ENCODE measurements at regions of chr6 and their contacts with region 1.

Region 1: DNA sequence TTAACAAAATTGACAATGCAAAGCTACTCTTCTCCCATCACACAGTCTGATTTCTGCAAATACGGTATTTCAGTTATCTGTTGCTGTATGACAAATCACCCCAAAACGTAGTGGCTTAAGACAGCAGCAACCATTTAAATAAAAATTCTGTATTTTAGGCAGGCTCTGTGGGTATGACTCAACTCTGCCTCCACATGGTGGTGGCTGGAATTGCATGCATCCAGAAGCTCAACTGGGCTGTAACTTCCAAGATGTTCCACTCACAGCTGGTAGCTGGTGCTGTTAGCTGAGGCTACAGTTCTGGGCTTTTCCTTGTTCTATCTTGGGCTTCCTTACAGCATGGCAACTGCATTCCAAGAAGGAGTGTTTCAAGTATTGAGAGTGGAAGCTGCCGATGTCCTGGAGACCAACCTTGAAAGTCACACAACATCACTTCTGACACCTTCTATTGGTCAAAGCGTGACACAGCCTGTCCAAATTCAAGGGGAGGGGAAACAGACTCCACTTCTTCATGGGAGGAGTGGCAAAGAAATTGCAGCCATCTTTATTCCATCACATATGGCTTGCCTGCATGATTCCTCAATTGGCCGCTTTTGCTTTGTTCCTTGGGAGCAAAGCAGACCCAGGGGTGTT is 39.7 kb upstream of the TULP1 start:
- DNase-seq: peak; percentile 36 to 84
- H3K4me3 ChIP-seq: no peak overlapping the region
- H3K27ac ChIP-seq: no peak overlapping the region
- H3K4me1 ChIP-seq: no peaks in the 10 kb centered on the region
- H3K27me3 ChIP-seq: no peaks in the 10 kb centered on the region
- CTCF ChIP-seq: peak; percentile 76 to 94 (median 83)
- EP300 ChIP-seq: no peak
- POLR2A ChIP-seq: no peak
- RAD21 ChIP-seq: peak; percentile 80 to 85

Region 2: DNA sequence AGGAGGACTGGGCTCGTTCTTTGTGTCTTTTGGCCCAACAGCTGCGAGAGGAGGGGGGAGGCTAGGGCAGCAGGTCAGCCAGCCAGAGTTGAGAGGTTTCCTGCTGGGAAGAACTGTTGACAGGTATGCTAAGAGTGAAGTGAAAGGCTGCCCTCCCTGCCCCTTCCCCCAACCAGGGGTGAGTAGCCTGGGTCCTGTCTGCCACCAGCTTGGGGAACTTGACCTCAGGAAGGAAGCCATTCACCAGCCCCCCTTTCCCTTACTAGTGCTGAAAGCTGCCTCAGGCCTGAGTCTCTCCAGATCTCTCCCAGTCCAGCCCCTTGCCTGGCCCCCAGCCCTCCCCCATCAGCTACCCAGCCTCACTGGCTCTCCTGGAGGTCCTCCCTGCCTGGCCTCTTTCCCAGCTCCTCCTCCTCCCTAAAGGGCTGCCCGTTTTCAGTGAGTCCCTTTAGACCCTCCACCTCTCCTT is 313.5 kb before region 1 on chr6:
- CTCF ChIA-PET with region 1: no interaction called
- POLR2A ChIA-PET with region 1: no interaction called
- DNase-seq: no peak
- H3K4me3 ChIP-seq: peak overlapping the region in 2 of 4 experiments; percentile 2 to 16; a peak in 2 of 8 replicates
- H3K27ac ChIP-seq: no peak overlapping the region
- H3K4me1 ChIP-seq: peaks cover 13 to 44% (median 21%) of the 10 kb centered on the region in 4 experiments
- H3K27me3 ChIP-seq: peaks cover 2 to 32% (median 24%) of the 10 kb centered on the region in 4 experiments
- CTCF ChIP-seq: no peak
- EP300 ChIP-seq: peak; percentile 43 to 51; a peak in 2 of 3 replicates
- POLR2A ChIP-seq: no peak
- RAD21 ChIP-seq: no peak

Region 3: GRCh38 chr6:35569011-35569461 is 16.6 kb after region 1 on chr6:
- CTCF ChIA-PET with region 1: interaction called, 46 read pairs
- POLR2A ChIA-PET with region 1: interaction called, 3 read pairs
- DNase-seq: peak in 1 of 2 experiments; percentile 83
- H3K4me3 ChIP-seq: no peak overlapping the region
- H3K27ac ChIP-seq: no peak overlapping the region
- H3K4me1 ChIP-seq: peaks cover 0 to 4% (median 2%) of the 10 kb centered on the region in 4 experiments; a peak in 3 of 7 replicates
- H3K27me3 ChIP-seq: no peaks in the 10 kb centered on the region
- CTCF ChIP-seq: peak; percentile 71 to 91 (median 87)
- EP300 ChIP-seq: no peak
- POLR2A ChIP-seq: no peak
- RAD21 ChIP-seq: peak; percentile 49 to 64

Region 4: DNA sequence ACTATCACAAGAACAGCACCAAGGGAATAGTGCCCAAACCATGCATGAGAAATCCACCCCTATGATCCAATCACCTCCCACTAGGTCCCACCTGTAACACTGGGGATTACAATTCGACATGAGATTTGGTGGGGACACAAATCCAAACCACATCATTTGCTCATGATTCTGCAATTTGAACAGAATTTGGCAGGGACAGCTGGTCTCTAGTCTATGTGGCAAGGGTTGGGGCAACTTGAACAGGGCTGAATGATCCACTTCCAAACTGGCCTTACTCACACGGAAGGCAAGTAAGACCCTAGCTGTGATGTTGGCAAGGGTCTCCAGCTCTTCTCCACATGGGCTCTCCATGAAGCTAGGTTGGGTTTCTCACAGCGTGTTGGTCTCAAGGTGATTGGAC is 146.5 kb after region 1 on chr6:
- CTCF ChIA-PET with region 1: no interaction called
- POLR2A ChIA-PET with region 1: no interaction called
- DNase-seq: no peak
- H3K4me3 ChIP-seq: no peak overlapping the region
- H3K27ac ChIP-seq: no peak overlapping the region
- H3K4me1 ChIP-seq: no peaks in the 10 kb centered on the region
- H3K27me3 ChIP-seq: no peaks in the 10 kb centered on the region
- CTCF ChIP-seq: no peak
- EP300 ChIP-seq: no peak
- POLR2A ChIP-seq: no peak
- RAD21 ChIP-seq: no peak